AG04449 (cell line): ENCODE measurements at regions of chr20 and their contacts with region 1.

Region 1: DNA sequence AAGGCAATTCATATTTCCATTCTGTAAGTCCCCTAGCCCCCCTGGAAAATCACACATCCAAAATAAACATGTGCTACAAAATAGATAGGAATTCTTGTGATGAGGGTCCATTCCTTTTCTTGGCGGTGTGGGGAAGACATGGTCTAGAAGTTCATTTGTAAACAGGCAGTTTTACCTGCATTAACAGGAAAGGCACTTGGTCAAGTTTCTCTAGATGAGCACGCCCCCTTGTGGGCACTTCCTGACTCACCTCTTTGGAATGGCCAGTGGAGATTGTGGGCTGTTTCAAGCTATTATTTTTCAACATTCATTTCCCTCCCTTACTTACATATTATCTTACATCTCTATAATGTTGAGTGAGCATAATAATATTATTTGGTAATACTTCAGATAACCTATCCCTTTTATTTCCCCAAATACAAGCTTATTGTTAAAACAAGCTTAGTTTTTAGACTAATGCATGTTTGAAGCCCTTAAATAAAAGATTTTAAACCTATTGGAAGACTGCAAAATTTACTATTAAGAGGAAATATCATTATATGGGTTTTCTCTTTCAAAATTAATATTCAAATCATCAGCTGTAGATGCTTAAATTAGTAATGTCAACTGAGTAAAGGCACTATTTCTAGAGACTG is 92.1 kb downstream of the TASP1 start:
- DNase-seq: no peak
- H3K4me3 ChIP-seq: no peak overlapping the region
- CTCF ChIP-seq: peak; percentile 75

Region 2: GRCh38 chr20:13325033-13325432 is 221.6 kb before region 1 on chr20:
- CTCF ChIA-PET with region 1: interaction called, 117 read pairs
- POLR2A ChIA-PET with region 1: no interaction called
- DNase-seq: no peak
- H3K4me3 ChIP-seq: no peak overlapping the region
- CTCF ChIP-seq: peak; percentile 68

Region 3: GRCh38 chr20:13458860-13459451 is 87.7 kb before region 1 on chr20:
- CTCF ChIA-PET with region 1: interaction called, 75 read pairs
- POLR2A ChIA-PET with region 1: no interaction called
- DNase-seq: no peak
- H3K4me3 ChIP-seq: no peak overlapping the region
- CTCF ChIP-seq: peak; percentile 58

Region 4: DNA sequence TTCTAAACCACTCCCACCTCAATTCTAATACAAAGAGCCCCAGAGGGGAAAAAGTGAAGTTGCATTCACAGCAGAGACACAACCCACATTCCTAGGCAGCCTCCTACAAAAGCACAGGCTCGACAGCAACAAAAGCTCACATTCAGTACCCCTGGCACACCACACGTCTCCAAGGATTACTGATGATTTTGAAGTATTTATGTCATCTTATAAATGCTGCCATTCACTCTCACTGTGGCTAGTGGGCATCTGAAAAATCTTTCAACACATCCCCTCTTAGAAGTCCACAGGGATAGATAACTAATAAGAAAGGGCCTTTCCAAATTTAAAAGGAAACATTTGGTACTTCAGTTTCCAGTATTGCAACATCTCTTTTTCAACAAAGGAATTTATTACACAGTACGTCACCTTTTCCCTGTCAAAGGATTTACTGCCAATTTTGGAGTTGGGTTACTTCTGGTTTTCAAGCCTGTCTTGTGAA is 54.6 kb before region 1 on chr20:
- CTCF ChIA-PET with region 1: interaction called, 13 read pairs
- POLR2A ChIA-PET with region 1: no interaction called
- DNase-seq: no peak
- H3K4me3 ChIP-seq: no peak overlapping the region
- CTCF ChIP-seq: no peak

Region 5: GRCh38 chr20:13771853-13772453 is 225.3 kb after region 1 on chr20:
- CTCF ChIA-PET with region 1: interaction called, 13 read pairs
- POLR2A ChIA-PET with region 1: no interaction called
- DNase-seq: no peak
- H3K4me3 ChIP-seq: no peak overlapping the region
- CTCF ChIP-seq: peak; percentile 2